ENCODE measurements at regions of chr18 and their contacts with region 1.

Region 1: GRCh38 chr18:47204908-47205522 is 28.9 kb upstream of the IER3IP1 start:
- DNase-seq: peak; percentile 27 to 34
- H3K4me3 ChIP-seq: no peak overlapping the region
- H3K27ac ChIP-seq: no peak overlapping the region
- H3K4me1 ChIP-seq: no peaks in the 10 kb centered on the region
- H3K27me3 ChIP-seq: no peaks in the 10 kb centered on the region
- CTCF ChIP-seq: peak; percentile 64 to 86 (median 76)
- POLR2A ChIP-seq: no peak

Region 2: DNA sequence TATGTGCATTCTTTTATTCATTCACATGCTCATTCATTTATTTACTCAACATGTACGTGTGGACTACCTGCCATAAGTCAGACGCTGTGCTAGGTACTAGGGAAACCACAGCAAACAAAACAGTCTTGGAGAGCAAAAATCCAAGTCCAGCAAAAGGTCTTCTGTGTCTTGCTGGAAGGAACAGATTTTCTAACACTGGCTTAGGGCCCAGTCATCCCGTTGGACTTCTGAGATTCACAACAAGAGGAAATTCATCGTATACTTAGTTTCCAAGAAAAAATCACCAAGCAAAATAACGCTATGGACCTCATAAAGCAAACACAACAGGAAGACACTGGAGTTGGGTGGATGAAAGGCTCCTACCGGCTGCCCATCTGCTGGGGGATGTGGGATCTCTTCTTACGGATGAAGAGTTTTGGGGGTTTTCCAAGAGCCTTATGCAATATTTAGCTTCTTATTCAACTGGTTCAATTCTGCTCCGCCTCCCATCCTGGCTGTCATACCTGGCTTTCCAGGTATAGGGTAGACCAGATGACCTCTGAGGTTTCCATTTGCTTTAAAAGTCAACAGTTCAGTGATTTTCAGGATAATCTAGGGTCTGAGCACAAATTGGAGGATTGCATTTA is 838.2 kb before region 1 on chr18:
- intact Hi-C with region 1: no loop called
- DNase-seq: peak in 1 of 2 donors; percentile 23
- H3K4me3 ChIP-seq: no peak overlapping the region
- H3K27ac ChIP-seq: peak overlapping the region; percentile 65 to 88 (median 86)
- H3K4me1 ChIP-seq: peaks cover 38 to 39% of the 10 kb centered on the region in 2 donors
- H3K27me3 ChIP-seq: no peaks in the 10 kb centered on the region
- CTCF ChIP-seq: no peak
- POLR2A ChIP-seq: no peak

Region 3: DNA sequence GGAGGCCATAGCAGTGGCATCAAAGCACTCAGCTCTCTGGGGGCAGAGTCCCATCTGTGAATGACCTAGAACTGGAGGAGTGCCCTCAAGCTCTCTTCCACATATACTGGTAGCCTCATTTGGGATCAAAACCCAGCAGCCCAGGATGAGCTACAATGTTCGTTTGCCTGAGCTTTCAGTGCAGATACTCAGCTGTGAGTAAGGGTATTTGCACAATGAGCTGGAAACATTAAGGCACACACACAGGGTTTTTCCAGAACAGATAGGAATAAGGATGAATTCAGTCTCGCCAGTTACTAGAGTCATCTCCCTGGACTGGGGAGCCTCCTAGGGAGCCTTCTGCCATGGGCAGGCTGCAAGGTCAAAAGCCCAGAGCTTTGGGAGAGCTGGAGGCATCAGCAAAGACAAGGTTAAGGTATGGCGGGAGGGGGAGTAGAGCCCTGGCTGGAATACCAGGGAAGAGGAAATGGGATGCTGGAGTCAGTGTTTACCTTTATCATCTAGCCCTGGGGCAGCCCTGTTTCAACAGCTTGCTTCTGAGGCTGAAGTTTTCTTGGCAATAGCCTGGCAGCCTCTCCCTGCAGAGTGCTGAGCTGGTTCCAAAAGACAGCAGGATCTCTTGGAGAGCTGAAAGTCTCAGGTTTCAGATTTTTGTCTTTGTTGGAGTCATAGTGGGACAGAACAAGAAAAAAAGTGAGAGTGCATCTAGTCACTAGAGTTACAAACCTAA is 735.7 kb before region 1 on chr18:
- intact Hi-C with region 1: no loop called
- DNase-seq: peak; percentile 41 to 49
- H3K4me3 ChIP-seq: no peak overlapping the region
- H3K27ac ChIP-seq: no peak overlapping the region
- H3K4me1 ChIP-seq: no peaks in the 10 kb centered on the region
- H3K27me3 ChIP-seq: no peaks in the 10 kb centered on the region
- CTCF ChIP-seq: no peak
- POLR2A ChIP-seq: no peak

Region 4: DNA sequence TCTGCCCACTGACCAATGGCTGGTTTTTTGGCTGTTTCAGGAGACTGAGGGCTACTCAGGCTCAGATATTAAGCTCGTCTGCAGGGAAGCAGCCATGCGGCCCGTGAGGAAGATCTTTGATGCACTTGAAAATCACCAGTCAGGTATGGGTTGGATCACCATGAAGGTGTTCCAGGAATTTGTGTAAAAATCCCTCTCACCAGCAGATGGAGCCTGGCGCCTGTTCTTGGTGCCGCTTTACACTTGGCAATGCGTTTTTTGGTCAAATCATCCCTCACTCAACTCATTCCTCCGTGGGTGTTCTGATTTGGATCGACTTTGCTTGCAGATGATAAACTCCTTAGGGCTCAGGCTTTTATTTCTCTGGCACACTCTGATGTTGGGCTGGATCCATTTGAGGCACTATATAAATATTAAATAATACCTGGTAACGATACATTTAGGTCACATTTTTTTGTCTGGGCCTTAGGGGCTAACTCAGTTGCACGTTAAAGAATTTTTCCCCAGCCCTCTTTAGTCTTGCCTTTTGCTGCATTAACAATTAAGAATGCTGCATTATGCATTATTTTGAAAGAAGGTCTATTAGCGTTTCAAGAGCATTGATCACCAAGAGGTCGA is 104.7 kb before region 1 on chr18:
- intact Hi-C with region 1: loop called (anchors 5 kb)
- DNase-seq: peak; percentile 59 to 73
- H3K4me3 ChIP-seq: no peak overlapping the region
- H3K27ac ChIP-seq: no peak overlapping the region
- H3K4me1 ChIP-seq: no peaks in the 10 kb centered on the region
- H3K27me3 ChIP-seq: no peaks in the 10 kb centered on the region
- CTCF ChIP-seq: peak; percentile 59 to 86 (median 68)
- POLR2A ChIP-seq: no peak

Region 5: DNA sequence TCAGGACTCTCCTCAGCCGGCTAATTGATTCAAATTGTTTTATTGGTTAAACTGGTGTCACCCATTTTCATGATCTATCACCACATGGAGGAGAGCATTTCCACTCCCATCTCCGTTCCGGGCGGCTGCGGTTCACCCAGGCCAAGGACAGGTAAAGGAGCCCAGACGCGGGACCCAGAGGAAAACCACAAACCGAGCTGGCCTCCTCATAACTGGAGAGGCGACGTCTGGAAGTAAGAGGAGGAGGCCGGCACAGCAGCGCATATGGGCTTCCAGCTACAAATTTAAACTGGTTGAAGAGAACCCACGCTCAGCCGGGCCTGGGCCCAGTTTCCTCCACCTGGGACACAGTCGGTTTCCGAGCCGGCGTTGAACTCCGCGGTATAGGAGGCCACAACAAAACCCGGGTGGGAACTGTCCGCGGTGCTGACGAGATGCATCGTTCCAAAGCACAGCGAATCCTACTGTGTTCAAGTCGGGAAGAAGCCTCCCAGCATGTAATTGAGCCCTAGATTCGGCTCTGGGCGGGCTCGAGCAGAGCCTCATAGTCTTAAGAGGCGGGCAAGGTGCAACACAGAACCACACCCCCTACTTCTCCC is 49.4 kb after region 1 on chr18:
- intact Hi-C with region 1: no loop called
- DNase-seq: peak; percentile 50 to 71
- H3K4me3 ChIP-seq: no peak overlapping the region
- H3K27ac ChIP-seq: no peak overlapping the region
- H3K4me1 ChIP-seq: peaks cover 0 to 5% of the 10 kb centered on the region in 2 donors
- H3K27me3 ChIP-seq: peaks cover 33% of the 10 kb centered on the region
- CTCF ChIP-seq: no peak
- POLR2A ChIP-seq: no peak

Region 6: GRCh38 chr18:47345291-47345690 is 140.3 kb after region 1 on chr18:
- intact Hi-C with region 1: no loop called
- DNase-seq: no peak
- H3K4me3 ChIP-seq: no peak overlapping the region
- H3K27ac ChIP-seq: no peak overlapping the region
- H3K4me1 ChIP-seq: no peaks in the 10 kb centered on the region
- H3K27me3 ChIP-seq: no peaks in the 10 kb centered on the region
- CTCF ChIP-seq: no peak
- POLR2A ChIP-seq: no peak

Measured in thyroid gland (tissue), 4 donors.